MCF 10A (cell line): ENCODE measurements at regions of chr3 and their contacts with region 1.

Region 1: DNA sequence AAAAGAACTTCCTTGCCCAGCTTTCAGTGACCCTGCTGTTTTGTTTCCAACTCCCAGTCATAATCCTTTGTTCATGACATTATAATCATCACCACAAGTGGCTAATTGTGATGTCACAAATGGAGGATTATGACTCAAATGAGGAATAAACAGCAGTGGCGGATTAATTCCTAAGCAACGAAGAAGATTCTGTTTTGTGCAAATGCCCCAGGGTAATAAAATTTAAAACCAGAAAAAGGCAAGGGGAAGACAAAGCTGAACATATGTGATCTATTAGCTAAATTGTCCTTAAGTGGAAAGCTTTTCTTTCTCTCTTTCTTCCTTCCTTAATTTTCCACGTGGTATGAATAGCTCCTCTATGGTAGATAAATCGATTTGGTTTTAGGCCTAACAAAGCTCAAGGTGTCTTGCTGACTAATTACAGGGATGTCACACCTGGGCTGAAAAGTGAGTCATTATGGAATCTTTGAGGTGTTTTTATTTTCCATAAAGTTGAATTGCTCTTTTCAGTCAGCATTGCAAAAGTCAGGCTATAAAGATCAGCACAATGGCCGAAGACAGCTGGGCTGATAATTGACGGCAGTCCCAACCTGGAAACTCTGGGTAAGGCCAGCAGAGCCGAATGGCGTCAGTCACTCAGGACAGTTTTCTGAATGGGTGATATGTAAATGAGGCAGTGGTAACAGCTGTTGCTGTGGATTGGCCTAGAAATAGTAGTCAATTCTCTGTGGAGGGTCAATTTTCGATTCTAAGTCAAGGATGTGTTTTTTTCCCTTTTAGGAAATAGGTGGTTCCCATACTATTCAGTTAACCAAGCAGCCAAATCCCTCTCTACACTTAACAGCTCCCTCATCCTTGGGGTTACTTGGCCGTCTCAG is 121.5 kb downstream of the PTPRG start:
- DNase-seq: peak; percentile 48
- H3K4me3 Mint-ChIP-seq: no peak overlapping the region
- H3K27ac Mint-ChIP-seq: peak overlapping the region; percentile 65
- H3K4me1 Mint-ChIP-seq: peaks cover 50% of the 10 kb centered on the region
- H3K27me3 Mint-ChIP-seq: no peaks in the 10 kb centered on the region
- CTCF ChIP-seq: no peak

Region 2: DNA sequence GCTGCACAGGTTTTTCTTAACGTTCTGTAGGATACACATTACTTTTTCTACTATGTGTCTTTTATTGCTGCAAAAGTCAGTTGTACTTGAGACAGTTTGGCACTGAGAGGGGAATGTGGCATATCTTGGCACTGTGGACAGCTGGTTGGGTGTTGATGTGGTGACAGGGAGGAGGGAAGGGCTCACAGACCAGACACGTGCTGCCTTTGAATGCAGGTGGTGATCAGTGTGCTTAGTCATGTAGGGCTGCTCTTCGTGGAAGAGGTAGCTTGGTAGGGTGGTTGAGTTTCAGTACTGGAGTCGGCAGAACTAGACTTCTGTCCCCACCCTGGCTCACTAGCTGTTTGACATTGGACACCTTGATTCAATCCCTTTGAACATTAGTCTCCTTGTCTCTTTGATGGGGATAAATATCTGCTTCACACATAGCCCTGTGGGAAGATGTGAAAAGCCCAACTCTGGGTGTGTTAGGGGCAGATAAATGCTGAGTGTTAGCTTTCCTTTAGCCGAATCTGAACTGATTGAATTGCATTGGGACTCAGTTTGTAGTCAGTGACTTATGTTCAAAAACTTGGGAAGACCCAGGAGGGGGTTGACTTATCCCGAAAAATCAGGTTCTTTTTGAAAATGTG is 13.1 kb before region 1 on chr3:
- CTCF ChIA-PET with region 1: interaction called, 4 read pairs
- POLR2A ChIA-PET with region 1: interaction called, 15 read pairs
- intact Hi-C with region 1: no loop called
- DNase-seq: peak; percentile 64
- H3K4me3 Mint-ChIP-seq: peak overlapping the region; percentile 20
- H3K27ac Mint-ChIP-seq: peak overlapping the region; percentile 84
- H3K4me1 Mint-ChIP-seq: peaks cover 21% of the 10 kb centered on the region
- H3K27me3 Mint-ChIP-seq: no peaks in the 10 kb centered on the region
- CTCF ChIP-seq: no peak

Region 3: DNA sequence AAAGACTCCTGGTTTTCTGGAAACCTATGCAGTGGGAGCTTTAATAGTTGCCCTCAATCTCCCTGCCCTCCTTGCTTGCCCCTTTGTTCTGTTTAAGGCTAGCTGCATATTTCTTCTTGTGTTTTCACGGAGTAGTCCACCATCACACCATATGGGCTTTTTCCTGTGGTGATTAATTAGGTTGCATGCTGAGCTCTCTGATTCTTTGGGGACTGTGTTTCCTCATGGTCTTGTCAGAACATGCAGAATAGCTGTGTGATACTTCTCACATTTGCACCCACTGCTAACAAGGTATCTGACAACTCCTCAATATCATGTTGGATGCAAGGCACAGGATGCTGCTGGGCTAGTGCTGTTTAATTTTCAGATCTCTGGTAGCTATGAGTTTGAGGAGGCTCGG is 18.1 kb after region 1 on chr3:
- CTCF ChIA-PET with region 1: interaction called, 5 read pairs
- POLR2A ChIA-PET with region 1: interaction called, 16 read pairs
- intact Hi-C with region 1: no loop called
- DNase-seq: peak; percentile 55
- H3K4me3 Mint-ChIP-seq: no peak overlapping the region
- H3K27ac Mint-ChIP-seq: peak overlapping the region; percentile 50
- H3K4me1 Mint-ChIP-seq: peaks cover 43% of the 10 kb centered on the region
- H3K27me3 Mint-ChIP-seq: no peaks in the 10 kb centered on the region
- CTCF ChIP-seq: no peak